OCI-LY7 (cell line): ENCODE measurements at regions of chr9 and their contacts with region 1.

Region 1: DNA sequence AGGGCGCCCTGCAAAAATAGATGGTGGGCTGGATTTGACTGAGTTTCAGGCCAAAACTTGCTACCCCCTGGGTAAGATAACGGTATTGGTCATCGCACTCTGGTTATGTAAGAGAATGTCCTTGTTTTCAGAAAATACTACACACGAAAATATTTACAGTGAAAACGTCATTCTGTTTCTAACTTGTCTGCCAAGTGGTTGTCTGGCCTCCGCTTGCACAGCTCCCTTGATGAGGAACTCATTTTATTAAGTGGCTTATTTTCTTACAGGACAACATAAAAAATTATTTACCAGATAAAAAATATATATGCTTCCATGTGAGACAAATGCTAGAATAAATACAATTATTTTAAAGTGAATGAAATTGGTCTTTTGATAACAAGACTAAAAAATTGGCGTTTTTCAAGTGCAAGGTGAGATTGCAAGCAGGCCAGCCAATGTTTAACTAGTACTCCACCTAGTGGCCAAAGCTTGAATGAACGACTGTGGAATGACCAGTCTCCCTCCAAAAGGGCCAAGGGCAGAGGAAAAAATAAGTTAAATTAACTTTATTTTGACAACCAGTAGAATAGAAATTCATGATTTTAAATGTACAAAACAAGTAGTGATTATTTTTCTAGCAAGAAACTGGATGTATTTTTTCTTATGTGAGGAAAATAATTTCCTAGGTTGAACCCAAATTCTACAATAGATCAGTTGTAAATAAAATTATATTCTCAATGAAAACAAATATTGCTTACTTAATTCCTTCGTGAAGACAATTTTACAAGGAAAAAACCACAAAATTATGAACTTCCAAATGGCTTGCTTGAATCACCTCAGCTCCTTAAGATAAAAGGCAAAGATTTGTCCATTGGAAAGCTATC is 93.2 kb downstream of the ZFAND5 start:
- DNase-seq: peak; percentile 60
- H3K4me3 ChIP-seq: no peak overlapping the region
- H3K27ac ChIP-seq: no peak overlapping the region
- H3K4me1 ChIP-seq: no peaks in the 10 kb centered on the region
- CTCF ChIP-seq: peak; percentile 96

Region 2: GRCh38 chr9:72038890-72039410 is 232.9 kb before region 1 on chr9:
- CTCF ChIA-PET with region 1: interaction called, 11 read pairs
- POLR2A ChIA-PET with region 1: no interaction called
- intact Hi-C with region 1: loop called (anchors 1 kb)
- DNase-seq: peak; percentile 64
- H3K4me3 ChIP-seq: no peak overlapping the region
- H3K27ac ChIP-seq: no peak overlapping the region
- H3K4me1 ChIP-seq: no peaks in the 10 kb centered on the region
- CTCF ChIP-seq: peak; percentile 86

Region 3: DNA sequence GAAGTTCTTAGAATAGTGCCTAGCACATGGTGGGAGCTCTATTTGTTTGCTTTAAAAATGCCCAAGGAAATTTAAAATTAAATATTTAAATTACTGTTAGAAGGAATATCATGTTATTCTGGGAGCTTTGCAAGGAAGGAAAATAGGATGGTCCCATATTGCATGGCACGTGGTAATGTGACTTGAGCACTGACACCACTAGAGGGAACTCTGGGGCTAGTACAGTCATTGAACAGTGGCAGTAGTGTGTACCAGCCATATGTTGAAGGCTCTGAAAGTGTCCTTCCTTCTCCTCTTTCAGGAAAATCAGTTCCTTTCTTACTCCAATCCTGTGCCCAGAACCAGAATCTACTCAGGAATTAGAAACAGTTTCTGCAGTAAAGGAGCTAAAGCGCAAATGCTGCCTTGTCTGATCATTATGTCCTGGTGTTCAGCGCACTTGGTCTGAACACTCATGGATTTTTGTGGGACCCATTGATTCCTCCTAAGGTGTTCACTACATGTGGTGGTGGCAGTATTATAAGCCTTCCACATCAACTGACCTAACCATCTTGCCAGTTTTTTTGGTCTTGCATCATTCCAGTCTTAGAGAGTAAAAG is 68.5 kb before region 1 on chr9:
- CTCF ChIA-PET with region 1: no interaction called
- POLR2A ChIA-PET with region 1: no interaction called
- intact Hi-C with region 1: loop called (anchors 5 kb)
- DNase-seq: peak; percentile 18
- H3K4me3 ChIP-seq: no peak overlapping the region
- H3K27ac ChIP-seq: no peak overlapping the region
- H3K4me1 ChIP-seq: no peaks in the 10 kb centered on the region
- CTCF ChIP-seq: peak; percentile 74

Region 4: DNA sequence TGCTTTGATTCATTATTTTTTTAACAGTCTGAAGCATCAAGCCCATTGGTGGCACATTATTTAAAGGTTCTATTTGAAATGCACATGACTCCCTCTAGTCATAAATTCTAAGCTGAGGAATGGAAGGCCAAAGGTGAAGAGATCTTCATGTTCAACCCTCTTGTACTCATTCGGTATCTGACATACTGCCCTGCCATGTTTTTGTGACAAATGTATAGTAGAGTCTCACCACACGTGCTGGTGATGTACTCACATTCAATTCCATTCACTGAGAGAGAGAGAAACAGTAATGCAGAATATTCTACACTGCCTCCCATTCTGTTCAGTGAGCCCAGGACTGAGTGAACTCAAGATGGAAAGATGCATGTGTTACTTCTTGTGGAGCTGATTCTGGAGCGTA is 24.3 kb before region 1 on chr9:
- CTCF ChIA-PET with region 1: no interaction called
- POLR2A ChIA-PET with region 1: no interaction called
- intact Hi-C with region 1: no loop called
- DNase-seq: no peak
- H3K4me3 ChIP-seq: no peak overlapping the region
- H3K27ac ChIP-seq: no peak overlapping the region
- H3K4me1 ChIP-seq: no peaks in the 10 kb centered on the region
- CTCF ChIP-seq: no peak